ENCODE measurements at regions of chr17 and their contacts with region 1.

Region 1: DNA sequence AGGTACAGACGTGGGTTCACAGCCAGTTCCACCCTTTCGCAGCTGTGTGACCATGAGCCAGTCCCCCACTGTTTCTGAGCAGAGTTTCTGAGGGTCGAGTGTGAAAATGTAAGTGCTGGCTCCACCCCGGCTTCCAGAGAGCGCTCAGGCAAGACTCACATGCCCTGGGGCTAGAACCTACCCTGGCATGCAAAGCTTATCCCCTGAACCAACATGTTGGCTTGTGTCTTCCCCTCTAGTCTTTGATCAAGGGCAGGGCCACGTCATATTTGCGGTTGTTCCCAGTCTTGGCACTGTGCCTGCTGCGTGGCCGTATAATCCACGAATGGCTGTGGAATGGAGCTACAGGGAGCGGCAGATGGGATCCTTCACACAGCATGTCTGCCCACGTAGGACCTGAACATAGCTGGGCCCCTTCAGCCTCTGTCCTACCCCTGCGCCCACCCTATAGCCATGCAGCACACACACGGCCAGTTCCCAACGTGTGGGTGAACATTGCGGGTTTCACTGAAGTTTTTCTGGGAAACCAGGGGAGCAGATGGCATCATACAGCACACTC is 84.8 kb downstream of the MRM1 start:
- DNase-seq: no peak
- ATAC-seq: no peak

Region 2: DNA sequence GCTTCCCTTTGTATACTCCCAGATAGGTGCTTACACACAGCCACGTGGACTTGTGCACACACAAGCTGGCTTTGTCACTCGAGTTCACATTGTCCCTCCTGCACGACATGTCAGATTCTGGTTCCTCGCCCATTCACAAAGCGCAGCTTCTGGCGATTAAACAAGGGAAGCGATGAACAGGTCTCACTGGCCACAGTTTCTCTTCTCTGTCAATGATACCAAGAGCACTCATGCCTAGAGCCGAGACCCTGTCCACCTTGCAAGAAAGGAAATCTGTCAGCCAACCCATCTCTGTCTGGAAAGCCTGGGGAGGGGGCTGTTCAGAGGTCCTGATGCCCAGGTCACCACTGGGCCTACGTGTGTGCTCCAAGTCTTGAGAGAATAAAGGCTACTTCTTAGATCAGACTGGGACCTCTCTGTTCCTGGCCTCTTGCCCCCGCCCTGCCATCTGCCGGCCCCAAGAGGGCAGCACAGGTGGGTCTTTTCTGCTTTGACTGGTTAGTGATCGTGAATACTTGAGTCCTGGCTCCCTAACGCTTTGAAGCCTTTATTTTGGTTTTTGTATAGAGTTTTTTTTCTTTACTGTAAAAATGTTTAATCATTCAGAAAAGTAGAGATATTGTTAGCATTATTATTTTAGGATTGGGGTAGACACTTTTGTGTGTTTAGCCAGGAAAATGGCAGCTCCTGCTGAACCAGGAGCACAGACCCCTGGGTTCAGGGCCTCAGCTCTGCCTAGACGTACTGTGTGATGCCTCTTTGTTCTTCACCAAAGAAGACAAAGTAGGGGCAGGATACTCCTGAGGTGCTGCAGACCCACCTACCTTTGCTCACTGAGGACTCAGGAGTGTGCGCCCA is 19.9 kb after region 1 on chr17:
- intact Hi-C with region 1: no loop called
- DNase-seq: no peak
- ATAC-seq: no peak

Region 3: GRCh38 chr17:36728030-36728991 is 42.1 kb after region 1 on chr17:
- intact Hi-C with region 1: no loop called
- DNase-seq: no peak
- ATAC-seq: no peak

Region 4: GRCh38 chr17:36742267-36743000 is 56.2 kb after region 1 on chr17:
- intact Hi-C with region 1: no loop called
- DNase-seq: no peak
- ATAC-seq: no peak

Region 5: GRCh38 chr17:36869856-36870719 is 183.9 kb after region 1 on chr17:
- intact Hi-C with region 1: loop called (anchors 10 kb)
- DNase-seq: no peak
- ATAC-seq: no peak

Region 6: GRCh38 chr17:37047631-37048104 is 361.5 kb after region 1 on chr17:
- intact Hi-C with region 1: no loop called
- DNase-seq: peak; percentile 90
- ATAC-seq: peak; percentile 80

Measured in sciatic nerve (tissue), 2 donors.